Ascending aorta (tissue), 2 donors: ENCODE measurements at regions of chr11 and their contacts with region 1.

Region 1: DNA sequence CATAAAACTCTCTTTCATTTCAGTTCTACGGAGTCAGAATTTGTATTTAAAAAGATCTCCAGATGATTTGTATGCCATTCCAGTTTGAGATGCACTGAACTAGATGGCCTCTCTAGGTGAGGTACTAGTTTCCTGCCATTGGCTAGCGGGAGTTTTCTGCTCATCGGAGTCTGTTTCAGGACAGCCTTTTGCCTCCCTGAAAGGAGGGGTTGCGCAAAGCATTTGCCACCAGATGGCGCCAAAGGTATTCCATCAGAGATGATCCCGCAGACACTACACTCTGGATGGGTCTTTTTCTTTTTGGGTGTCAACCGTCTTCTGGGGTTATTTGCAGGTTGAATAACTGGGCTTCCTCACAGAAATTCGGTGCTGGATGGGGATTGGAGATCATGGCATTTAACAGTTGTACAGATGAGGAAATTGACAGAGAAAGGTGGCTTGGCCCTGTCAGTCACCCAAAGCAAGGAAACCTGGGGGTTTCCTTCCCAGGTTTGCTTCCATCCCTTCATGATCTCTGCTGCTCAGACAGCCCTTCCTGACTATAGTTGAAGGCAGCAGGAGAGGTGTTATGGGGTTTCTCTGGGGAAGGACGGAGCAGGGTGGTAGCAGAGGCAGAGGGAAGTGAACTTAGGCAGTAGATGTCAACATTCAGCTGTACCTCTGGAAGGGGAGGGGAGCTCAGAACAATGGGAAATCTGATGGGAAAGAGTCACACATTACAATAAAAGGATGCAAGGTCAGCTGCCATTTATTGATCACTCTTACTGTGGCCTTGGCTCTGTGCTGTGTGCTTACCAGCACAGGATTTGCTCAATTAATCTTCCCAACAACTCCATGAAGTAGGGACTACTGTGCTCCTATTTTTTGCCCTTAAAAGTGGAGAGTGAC is 81.6 kb downstream of the CCDC81 start:
- DNase-seq: peak; percentile 24 to 92
- H3K4me3 ChIP-seq: no peak overlapping the region
- H3K27ac ChIP-seq: no peak overlapping the region
- H3K4me1 ChIP-seq: peaks cover 9 to 22% of the 10 kb centered on the region in 2 donors
- H3K27me3 ChIP-seq: no peaks in the 10 kb centered on the region
- CTCF ChIP-seq: peak; percentile 83 to 92 (median 90)

Region 2: DNA sequence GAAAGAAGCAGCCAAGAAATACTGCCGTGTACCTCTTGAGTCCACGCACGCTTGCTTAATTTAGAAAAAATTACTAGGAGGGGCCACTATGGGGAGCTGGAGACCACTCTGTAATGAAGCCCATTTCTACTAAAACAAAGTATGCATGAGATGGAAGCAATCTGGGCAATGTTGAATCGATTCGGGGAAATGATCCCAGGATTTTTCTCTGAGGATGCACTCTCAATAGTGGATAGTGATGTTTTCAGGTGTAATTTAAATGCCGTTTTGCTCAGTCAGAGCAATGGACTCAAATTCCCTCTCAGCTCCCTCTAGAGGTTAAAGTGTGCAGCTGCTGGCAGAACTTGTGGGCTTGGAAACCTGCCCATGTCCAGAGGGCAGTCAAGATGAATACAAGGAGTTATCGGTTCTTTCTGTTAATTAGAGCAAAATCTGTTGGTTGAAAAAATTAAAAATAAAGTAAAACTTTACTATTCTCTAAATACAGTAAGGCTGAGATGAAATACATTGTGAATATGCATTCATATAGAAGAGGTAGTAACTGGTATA is 152.0 kb after region 1 on chr11:
- intact Hi-C with region 1: loop called (anchors 1 kb)
- DNase-seq: peak in 1 of 2 donors; percentile 84
- H3K4me3 ChIP-seq: peak overlapping the region; percentile 25 to 46
- H3K27ac ChIP-seq: peak overlapping the region in 1 of 2 donors; percentile 49
- H3K4me1 ChIP-seq: peaks cover 4 to 19% of the 10 kb centered on the region in 2 donors
- H3K27me3 ChIP-seq: no peaks in the 10 kb centered on the region
- CTCF ChIP-seq: peak; percentile 83 to 93 (median 83)

Region 3: GRCh38 chr11:86706321-86706720 is 250.0 kb after region 1 on chr11:
- intact Hi-C with region 1: no loop called
- DNase-seq: no peak
- H3K4me3 ChIP-seq: no peak overlapping the region
- H3K27ac ChIP-seq: no peak overlapping the region
- H3K4me1 ChIP-seq: no peaks in the 10 kb centered on the region
- H3K27me3 ChIP-seq: no peaks in the 10 kb centered on the region
- CTCF ChIP-seq: no peak

Region 4: DNA sequence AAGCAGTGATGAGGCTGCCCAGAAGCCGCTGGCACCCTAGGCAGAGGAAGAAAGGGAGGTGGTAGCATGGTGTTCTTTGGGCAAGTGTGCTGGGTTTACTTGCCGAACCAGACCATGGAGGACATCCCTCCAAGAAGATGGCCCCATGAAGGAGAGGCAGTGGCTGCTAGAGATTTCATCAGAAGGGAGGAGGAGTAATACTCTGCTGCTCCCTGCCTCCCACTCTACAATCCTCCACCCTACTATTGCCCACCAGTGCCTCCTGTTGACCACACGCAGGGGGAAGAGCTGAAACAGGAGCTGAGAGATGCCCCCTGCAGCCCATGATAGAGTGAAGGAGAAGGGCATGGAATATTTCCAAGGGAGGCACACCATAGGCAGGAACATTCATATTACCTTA is 293.1 kb after region 1 on chr11:
- intact Hi-C with region 1: loop called (anchors 5 kb)
- DNase-seq: no peak
- H3K4me3 ChIP-seq: no peak overlapping the region
- H3K27ac ChIP-seq: no peak overlapping the region
- H3K4me1 ChIP-seq: peaks cover 0 to 5% of the 10 kb centered on the region in 2 donors
- H3K27me3 ChIP-seq: no peaks in the 10 kb centered on the region
- CTCF ChIP-seq: no peak

Region 5: GRCh38 chr11:86818466-86819192 is 362.3 kb after region 1 on chr11:
- intact Hi-C with region 1: loop called (anchors 1 kb)
- DNase-seq: no peak
- H3K4me3 ChIP-seq: peak overlapping the region in 1 of 2 donors; percentile 26
- H3K27ac ChIP-seq: no peak overlapping the region
- H3K4me1 ChIP-seq: peaks cover 8 to 41% of the 10 kb centered on the region in 2 donors
- H3K27me3 ChIP-seq: no peaks in the 10 kb centered on the region
- CTCF ChIP-seq: peak; percentile 56 to 73 (median 71)